ENCODE measurements at regions of chr9 and their contacts with region 1.

Region 1: DNA sequence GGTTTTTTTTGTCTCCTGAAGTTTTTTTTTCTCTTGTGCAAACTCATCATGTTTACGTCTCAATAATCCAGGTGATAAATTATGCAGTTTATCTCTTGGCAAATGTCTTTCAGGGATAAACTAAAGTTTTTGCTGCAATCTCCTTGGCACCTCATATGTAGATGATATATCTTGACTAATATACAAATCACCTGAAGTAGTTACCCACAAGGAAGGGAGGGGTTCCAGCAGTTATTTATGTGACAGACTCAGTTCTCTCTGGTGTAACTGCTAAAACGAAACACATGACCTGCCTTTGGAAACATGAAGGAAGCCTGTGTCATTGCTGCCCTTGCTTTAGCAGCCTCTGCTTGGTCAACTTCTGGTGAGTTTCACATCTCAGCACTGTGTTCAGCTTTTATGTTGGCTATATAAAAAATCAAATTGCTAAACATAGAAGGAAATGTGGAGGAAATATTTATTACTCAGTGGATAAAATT is 39.3 kb upstream of the KIAA1958 start:
- DNase-seq: peak; percentile 15
- H3K27ac ChIP-seq: no peak overlapping the region
- CTCF ChIP-seq: no peak

Region 2: DNA sequence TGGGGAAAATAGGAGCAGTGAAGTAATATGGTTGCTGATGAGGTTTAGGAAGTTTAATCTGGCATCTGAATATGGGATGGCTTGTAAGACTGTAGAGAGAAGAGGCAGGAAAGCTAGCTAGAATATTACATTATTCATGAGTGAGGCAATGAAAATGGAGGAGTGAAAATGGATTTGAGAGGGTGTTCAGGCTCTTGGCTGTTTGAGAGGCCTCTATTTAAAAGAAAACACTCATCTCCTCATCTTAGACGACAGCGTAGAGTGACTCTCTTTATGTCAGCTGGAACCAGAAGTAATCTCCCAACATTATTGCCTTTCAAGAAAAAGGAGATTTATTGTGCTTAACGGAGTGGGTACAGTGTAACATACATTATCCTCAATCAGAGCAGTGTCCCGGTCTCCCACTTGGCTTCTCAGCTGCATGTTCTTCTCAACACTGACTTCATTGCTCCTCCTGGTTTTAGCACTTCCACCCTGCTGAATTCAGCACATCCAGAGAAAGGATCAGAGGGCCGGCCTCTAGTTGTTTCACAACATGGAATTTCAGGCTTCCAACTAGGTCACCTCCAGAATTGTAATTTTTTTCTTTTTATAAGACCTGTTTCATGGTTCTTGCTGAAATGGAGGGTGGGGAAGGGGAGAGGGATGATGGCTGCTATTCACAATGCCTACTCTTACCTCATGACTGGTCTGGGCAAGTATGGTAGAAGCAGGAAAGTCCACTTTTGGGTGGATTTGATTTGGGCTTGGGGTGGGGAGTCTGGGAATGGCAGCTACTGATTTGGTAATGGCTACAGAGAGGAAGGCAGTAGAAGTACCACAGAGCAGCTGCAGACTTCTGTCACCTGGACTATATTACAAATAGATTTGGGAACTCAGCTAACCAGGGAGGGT is 13.6 kb before region 1 on chr9:
- CTCF ChIA-PET with region 1: interaction called, 10 read pairs
- POLR2A ChIA-PET with region 1: no interaction called
- DNase-seq: no peak
- H3K27ac ChIP-seq: no peak overlapping the region
- CTCF ChIP-seq: no peak

Region 3: DNA sequence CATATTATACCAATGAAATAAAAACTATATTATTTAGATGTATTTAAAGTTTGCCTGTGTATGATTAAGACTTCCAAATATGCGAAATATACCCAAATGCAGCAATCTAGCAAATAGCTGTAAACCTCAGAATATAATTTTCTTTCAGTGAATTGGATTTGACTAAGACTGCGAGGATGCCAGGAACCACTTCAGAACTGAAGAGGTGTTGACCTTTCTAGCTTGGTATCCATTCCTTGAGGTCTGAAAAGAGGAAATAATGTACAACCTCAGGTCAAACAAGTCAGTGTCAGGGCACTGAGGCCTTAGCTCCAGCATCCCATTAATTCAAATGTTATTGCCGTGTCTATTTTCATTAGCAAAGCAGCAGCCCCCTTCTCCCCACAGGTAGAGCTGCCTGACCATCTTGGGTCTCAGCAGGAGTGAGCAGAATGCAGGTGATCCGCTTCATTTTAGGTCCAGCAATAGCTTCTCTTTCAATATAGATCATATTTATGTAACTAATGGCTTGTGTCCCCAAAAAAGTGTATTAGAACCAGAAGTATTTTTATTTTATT is 139.4 kb after region 1 on chr9:
- CTCF ChIA-PET with region 1: no interaction called
- POLR2A ChIA-PET with region 1: no interaction called
- DNase-seq: no peak
- H3K27ac ChIP-seq: no peak overlapping the region
- CTCF ChIP-seq: no peak